ENCODE measurements at regions of chr10 and their contacts with region 1.

Region 1: GRCh38 chr10:87054373-87055295 is 34.5 kb downstream of the FAM25A start:
- DNase-seq: no peak
- H3K4me3 ChIP-seq: peak overlapping the region in 2 of 59 donors; percentile 5 to 6
- H3K27ac ChIP-seq: peak overlapping the region; percentile 6 to 98 (median 91)
- H3K27me3 ChIP-seq: no peaks in the 10 kb centered on the region
- CTCF ChIP-seq: peak in 10 of 56 donors; percentile 9 to 31 (median 16)

Region 2: GRCh38 chr10:86836044-86836443 is 218.6 kb before region 1 on chr10:
- intact Hi-C with region 1: no loop called
- DNase-seq: no peak
- H3K4me3 ChIP-seq: no peak overlapping the region
- H3K27ac ChIP-seq: no peak overlapping the region
- H3K27me3 ChIP-seq: no peaks in the 10 kb centered on the region
- CTCF ChIP-seq: no peak

Region 3: DNA sequence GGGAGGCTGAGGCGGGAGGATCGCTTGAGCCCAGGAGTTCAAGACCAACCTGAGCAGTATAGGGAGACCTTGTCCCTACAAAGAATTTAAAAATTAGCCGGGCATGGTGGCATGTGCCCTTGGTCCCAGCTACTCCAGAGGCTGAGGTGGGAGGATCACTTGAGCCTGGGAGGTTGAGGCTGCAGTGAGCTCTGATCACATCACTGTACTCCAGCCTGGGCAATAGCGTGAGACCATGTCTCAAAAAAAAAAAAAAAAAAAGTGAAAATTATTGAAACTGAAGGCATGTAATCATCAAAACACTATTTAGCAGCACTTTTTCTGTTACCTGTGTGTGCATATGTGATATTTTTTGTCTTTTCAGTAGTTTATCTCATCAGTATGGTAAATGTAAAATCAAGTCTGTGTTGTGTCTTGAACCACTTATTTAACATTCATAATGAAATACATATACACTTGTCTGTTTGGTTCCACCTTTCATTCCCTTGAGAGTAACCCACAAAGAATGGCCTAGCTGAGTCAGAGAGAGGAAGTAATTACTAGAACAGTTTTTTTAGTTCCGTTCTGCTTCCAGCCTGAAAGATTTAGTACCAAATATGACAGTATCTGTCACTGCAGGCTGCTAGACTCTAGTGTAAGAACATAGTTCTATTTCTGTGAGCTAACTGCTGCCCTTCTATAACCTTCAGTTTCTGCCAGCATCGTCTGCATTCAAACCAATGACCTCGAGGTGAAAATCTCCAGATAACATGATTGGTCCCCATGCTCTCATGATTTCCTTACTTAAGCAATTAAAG is 165.9 kb before region 1 on chr10:
- intact Hi-C with region 1: no loop called
- DNase-seq: no peak
- H3K4me3 ChIP-seq: no peak overlapping the region
- H3K27ac ChIP-seq: peak overlapping the region in 2 of 59 donors; percentile 7 to 13
- H3K27me3 ChIP-seq: no peaks in the 10 kb centered on the region
- CTCF ChIP-seq: no peak

Region 4: GRCh38 chr10:86971232-86971991 is 83.2 kb before region 1 on chr10:
- intact Hi-C with region 1: loop called in 1 of 2 experiments (anchors 5 kb)
- DNase-seq: peak in 2 of 10 donors; percentile 57 to 66
- H3K4me3 ChIP-seq: peak overlapping the region; percentile 25 to 75 (median 61)
- H3K27ac ChIP-seq: peak overlapping the region in 58 of 59 donors; percentile 2 to 96 (median 82)
- H3K27me3 ChIP-seq: peaks cover 0 to 3% (median 0%) of the 10 kb centered on the region in 45 donors
- CTCF ChIP-seq: peak in 3 of 56 donors; percentile 11 to 22 (median 12)